A549 (cell line): ENCODE measurements at regions of chr15 and their contacts with region 1.

Region 1: DNA sequence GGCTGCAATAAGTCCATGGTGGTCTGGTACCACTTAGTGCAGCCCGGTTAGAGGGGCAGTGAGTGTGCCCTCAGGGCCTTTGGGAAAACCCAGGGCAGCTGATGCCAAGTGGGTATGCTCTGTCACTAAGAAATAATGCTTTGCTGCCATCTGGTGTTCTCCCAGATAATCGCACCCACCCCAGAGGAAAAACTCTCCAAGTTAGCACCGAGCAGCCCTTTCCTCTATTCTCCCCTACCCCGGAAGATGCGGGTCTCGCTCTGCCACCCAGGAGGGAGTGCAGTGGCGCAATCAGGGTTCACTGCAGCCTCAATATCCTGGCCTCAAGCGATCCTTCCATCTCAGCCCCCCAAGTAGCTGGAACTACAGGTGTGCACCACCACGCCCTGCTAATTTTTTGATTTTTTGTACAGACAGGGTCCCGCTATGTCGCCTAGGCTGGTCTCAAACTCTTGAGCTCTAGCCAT is 21.3 kb upstream of the DAPK2 start:
- DNase-seq: peak; percentile 61 to 80
- ATAC-seq: peak; percentile 77 to 88
- H3K4me3 ChIP-seq: no peak overlapping the region
- H3K27ac ChIP-seq: peak overlapping the region in 1 of 2 experiments; percentile 44; a peak in 2 of 6 replicates
- H3K4me1 ChIP-seq: peaks cover 24% of the 10 kb centered on the region
- CTCF ChIP-seq: peak; percentile 93
- EP300 ChIP-seq: no peak
- POLR2A ChIP-seq: no peak
- RAD21 ChIP-seq: peak; percentile 97 to 98

Region 2: DNA sequence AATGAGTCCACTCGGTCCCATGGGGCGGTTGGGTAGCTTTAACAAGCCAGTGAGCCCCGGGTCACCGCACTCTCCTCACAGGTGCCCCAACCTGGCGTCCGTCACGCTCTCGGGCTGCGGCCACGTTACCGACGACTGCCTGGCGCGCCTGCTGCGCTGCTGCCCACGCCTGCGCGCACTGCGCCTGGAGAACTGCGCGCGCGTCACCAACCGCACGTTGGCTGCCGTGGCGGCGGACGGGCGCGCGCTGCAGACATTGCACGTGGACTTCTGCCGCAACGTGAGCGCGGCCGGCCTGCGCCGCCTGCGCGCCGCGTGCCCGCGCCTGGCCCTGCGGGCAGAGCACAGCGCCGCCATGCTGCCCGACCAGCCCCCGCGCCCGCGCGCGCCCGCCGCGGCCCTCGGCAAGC is 467.0 kb before region 1 on chr15:
- CTCF ChIA-PET with region 1: interaction called, 21 read pairs
- POLR2A ChIA-PET with region 1: no interaction called
- DNase-seq: peak; percentile 94 to 96
- ATAC-seq: peak; percentile 70 to 79
- H3K4me3 ChIP-seq: peak overlapping the region; percentile 83
- H3K27ac ChIP-seq: peak overlapping the region; percentile 91 to 93
- H3K4me1 ChIP-seq: peaks cover 20% of the 10 kb centered on the region; the same call in 2 of the 3 replicates
- CTCF ChIP-seq: peak; percentile 46; the same call in 1 of the 3 replicates
- EP300 ChIP-seq: no peak
- POLR2A ChIP-seq: peak; percentile 97
- RAD21 ChIP-seq: no peak; a peak in 1 of 5 replicates

Region 3: DNA sequence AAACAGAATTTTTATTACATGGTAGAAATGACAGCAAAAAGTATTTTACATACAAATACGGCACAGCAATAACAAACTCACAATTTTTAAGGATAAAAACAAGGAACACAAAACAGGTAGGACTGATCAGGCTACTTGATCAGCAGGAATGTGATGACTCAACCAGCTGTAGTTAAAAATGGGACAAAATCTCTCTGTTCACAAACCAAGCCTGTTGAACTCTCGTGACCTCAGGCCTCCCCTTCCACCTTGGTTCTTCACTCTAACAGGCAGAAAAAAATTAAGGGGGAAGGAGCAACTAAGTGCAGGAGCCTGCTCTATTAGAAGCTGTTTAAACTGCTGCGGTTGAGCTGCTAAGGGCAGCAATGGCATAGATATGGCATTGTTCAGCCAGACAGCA is 451.7 kb before region 1 on chr15:
- CTCF ChIA-PET with region 1: interaction called, 166 read pairs
- POLR2A ChIA-PET with region 1: no interaction called
- DNase-seq: no peak
- ATAC-seq: no peak
- H3K4me3 ChIP-seq: no peak overlapping the region
- H3K27ac ChIP-seq: no peak overlapping the region
- H3K4me1 ChIP-seq: peaks cover 16% of the 10 kb centered on the region
- CTCF ChIP-seq: no peak
- EP300 ChIP-seq: no peak
- POLR2A ChIP-seq: no peak
- RAD21 ChIP-seq: no peak

Region 4: GRCh38 chr15:63836579-63836978 is 231.0 kb before region 1 on chr15:
- CTCF ChIA-PET with region 1: interaction called, 14 read pairs
- POLR2A ChIA-PET with region 1: no interaction called
- DNase-seq: no peak
- ATAC-seq: no peak
- H3K4me3 ChIP-seq: no peak overlapping the region
- H3K27ac ChIP-seq: no peak overlapping the region
- H3K4me1 ChIP-seq: peaks cover 14% of the 10 kb centered on the region; the same call in 1 of the 3 replicates
- CTCF ChIP-seq: no peak
- EP300 ChIP-seq: no peak
- POLR2A ChIP-seq: no peak
- RAD21 ChIP-seq: no peak

Region 5: GRCh38 chr15:63945007-63945788 is 122.4 kb before region 1 on chr15:
- CTCF ChIA-PET with region 1: interaction called, 37 read pairs
- POLR2A ChIA-PET with region 1: no interaction called
- DNase-seq: peak; percentile 64 to 90
- ATAC-seq: peak; percentile 89 to 97
- H3K4me3 ChIP-seq: no peak overlapping the region
- H3K27ac ChIP-seq: peak overlapping the region in 1 of 2 experiments; percentile 12; a peak in 1 of 6 replicates
- H3K4me1 ChIP-seq: no peaks in the 10 kb centered on the region
- CTCF ChIP-seq: peak; percentile 86
- EP300 ChIP-seq: no peak
- POLR2A ChIP-seq: no peak
- RAD21 ChIP-seq: peak; percentile 62 to 76

Region 6: GRCh38 chr15:64082757-64083156 is 15.2 kb after region 1 on chr15:
- CTCF ChIA-PET with region 1: interaction called, 44 read pairs
- POLR2A ChIA-PET with region 1: no interaction called
- DNase-seq: no peak
- ATAC-seq: no peak
- H3K4me3 ChIP-seq: no peak overlapping the region
- H3K27ac ChIP-seq: no peak overlapping the region
- H3K4me1 ChIP-seq: no peaks in the 10 kb centered on the region
- CTCF ChIP-seq: no peak
- EP300 ChIP-seq: no peak
- POLR2A ChIP-seq: no peak
- RAD21 ChIP-seq: no peak

Region 7: GRCh38 chr15:64284042-64284441 is 216.4 kb after region 1 on chr15:
- CTCF ChIA-PET with region 1: no interaction called
- POLR2A ChIA-PET with region 1: no interaction called
- DNase-seq: peak in 1 of 2 experiments; percentile 14
- ATAC-seq: no peak
- H3K4me3 ChIP-seq: no peak overlapping the region
- H3K27ac ChIP-seq: no peak overlapping the region
- H3K4me1 ChIP-seq: peaks cover 31% of the 10 kb centered on the region
- CTCF ChIP-seq: no peak
- EP300 ChIP-seq: no peak
- POLR2A ChIP-seq: no peak
- RAD21 ChIP-seq: no peak